Naive thymus-derived CD4-positive, alpha-beta T cell (primary cell): ENCODE measurements at regions of chr10 and their contacts with region 1.

Region 1: DNA sequence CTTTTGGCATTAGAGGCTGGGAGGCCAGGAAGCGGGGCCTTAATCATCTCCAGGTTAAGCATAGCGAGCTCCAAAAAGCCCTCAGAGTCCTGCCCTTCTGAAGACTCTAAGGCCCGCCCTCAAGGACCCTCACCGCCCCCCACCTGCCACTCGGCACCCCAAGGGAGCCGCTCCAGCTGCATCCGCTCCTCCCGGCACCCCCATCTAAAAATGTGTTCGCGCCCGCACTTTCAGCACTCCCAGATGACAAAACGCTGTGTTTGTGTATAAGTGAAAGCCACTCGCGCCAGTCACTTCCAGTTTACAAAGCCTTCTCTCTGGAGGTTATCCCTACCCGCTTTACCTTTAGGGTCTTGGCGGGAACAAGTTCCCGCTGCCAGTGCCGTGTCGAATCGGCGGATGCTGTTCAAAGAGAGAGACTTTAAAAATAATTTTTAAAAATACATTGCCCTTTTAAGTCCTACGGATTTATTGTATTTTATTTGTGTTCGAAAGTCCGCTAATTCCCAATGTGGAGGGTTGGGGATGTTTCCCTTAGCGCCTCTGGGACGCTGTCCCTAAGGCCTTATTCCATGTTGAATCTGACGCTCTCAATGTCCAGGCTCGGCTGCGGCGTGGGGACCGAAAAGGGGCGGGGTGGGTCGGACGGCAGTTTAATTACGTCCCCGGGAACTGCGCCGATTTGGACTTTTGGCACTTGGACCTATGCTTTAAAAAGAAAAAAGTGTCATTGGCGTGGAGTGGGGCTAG is at the starts of genes DCLRE1A and NHLRC2:
- DNase-seq: peak; percentile 26 to 55 (median 50)
- ATAC-seq: peak; percentile 73
- H3K4me3 ChIP-seq: peak within 1 kb of the TSS; percentile 90
- H3K4me3 Mint-ChIP-seq: peak within 1 kb of the TSS; percentile 90 to 100 (median 97)
- H3K27ac ChIP-seq: peak within 1 kb of the TSS; percentile 79
- H3K27ac Mint-ChIP-seq: peak within 1 kb of the TSS; percentile 89 to 100 (median 97)
- H3K4me1 ChIP-seq: peaks cover 3 to 42% of the 10 kb centered on the region in 2 donors
- H3K4me1 Mint-ChIP-seq: peaks cover 24 to 60% (median 52%) of the 10 kb centered on the region in 7 donors
- H3K27me3 ChIP-seq: no peaks in the 10 kb centered on the region
- H3K27me3 Mint-ChIP-seq: no peaks in the 10 kb centered on the region
- total RNA-seq, gene DCLRE1A: 1.5 to 12.9 (median 4.3) TPM
- total RNA-seq, gene NHLRC2: 10.3 to 25.9 (median 20.5) TPM

Region 2: GRCh38 chr10:112375721-112376395 is 1478.3 kb before region 1 on chr10:
- CTCF ChIA-PET with region 1: no interaction called
- POLR2A ChIA-PET with region 1: no interaction called
- intact Hi-C with region 1: loop called in 1 of 2 experiments (anchors 5 kb)
- DNase-seq: peak; percentile 33 to 70 (median 59)
- ATAC-seq: peak; percentile 87
- H3K4me3 ChIP-seq: peak overlapping the region; percentile 89
- H3K4me3 Mint-ChIP-seq: peak overlapping the region; percentile 95 to 100 (median 100)
- H3K27ac ChIP-seq: peak overlapping the region; percentile 95
- H3K27ac Mint-ChIP-seq: peak overlapping the region; percentile 97 to 100 (median 99)
- H3K4me1 ChIP-seq: peaks cover 11 to 21% of the 10 kb centered on the region in 2 donors
- H3K4me1 Mint-ChIP-seq: peaks cover 36 to 72% (median 61%) of the 10 kb centered on the region in 7 donors
- H3K27me3 ChIP-seq: no peaks in the 10 kb centered on the region
- H3K27me3 Mint-ChIP-seq: no peaks in the 10 kb centered on the region

Region 3: DNA sequence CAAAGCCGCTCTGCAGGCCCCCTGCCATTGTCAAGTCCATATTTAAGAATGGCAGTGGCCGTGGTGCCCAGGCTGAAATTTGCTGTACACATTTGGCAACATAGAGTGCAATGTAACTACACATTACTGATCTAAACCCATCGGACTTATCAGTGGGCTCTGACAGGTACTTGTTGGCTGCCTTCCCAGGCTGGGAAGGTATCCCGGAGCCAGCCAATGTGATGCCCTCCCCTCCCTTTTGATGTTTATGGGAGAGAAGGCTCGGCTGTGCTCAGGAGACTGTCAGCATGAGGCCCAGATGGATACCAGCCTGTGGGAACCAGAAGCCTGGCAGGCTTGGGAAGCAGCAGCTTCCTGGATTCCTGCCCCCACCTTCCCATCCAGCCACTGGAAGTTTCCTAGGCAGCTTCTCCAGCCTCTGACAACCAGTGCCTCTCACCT is 1050.2 kb before region 1 on chr10:
- CTCF ChIA-PET with region 1: no interaction called
- POLR2A ChIA-PET with region 1: no interaction called
- intact Hi-C with region 1: no loop called
- DNase-seq: no peak
- ATAC-seq: no peak
- H3K4me3 ChIP-seq: no peak overlapping the region
- H3K4me3 Mint-ChIP-seq: no peak overlapping the region
- H3K27ac ChIP-seq: no peak overlapping the region
- H3K27ac Mint-ChIP-seq: no peak overlapping the region
- H3K4me1 ChIP-seq: no peaks in the 10 kb centered on the region
- H3K4me1 Mint-ChIP-seq: peaks cover 0 to 5% (median 0%) of the 10 kb centered on the region in 7 donors
- H3K27me3 ChIP-seq: no peaks in the 10 kb centered on the region
- H3K27me3 Mint-ChIP-seq: no peaks in the 10 kb centered on the region

Region 4: GRCh38 chr10:113415246-113415645 is 438.9 kb before region 1 on chr10:
- CTCF ChIA-PET with region 1: no interaction called
- POLR2A ChIA-PET with region 1: no interaction called
- intact Hi-C with region 1: no loop called
- DNase-seq: no peak
- ATAC-seq: no peak
- H3K4me3 ChIP-seq: no peak overlapping the region
- H3K4me3 Mint-ChIP-seq: no peak overlapping the region
- H3K27ac ChIP-seq: no peak overlapping the region
- H3K27ac Mint-ChIP-seq: no peak overlapping the region
- H3K4me1 ChIP-seq: no peaks in the 10 kb centered on the region
- H3K4me1 Mint-ChIP-seq: no peaks in the 10 kb centered on the region
- H3K27me3 ChIP-seq: peaks cover 0 to 3% of the 10 kb centered on the region in 2 donors
- H3K27me3 Mint-ChIP-seq: peaks cover 2 to 36% (median 32%) of the 10 kb centered on the region in 5 donors

Region 5: GRCh38 chr10:113631684-113632367 is 222.4 kb before region 1 on chr10:
- CTCF ChIA-PET with region 1: no interaction called
- POLR2A ChIA-PET with region 1: no interaction called
- intact Hi-C with region 1: no loop called
- DNase-seq: no peak
- ATAC-seq: no peak
- H3K4me3 ChIP-seq: no peak overlapping the region
- H3K4me3 Mint-ChIP-seq: no peak overlapping the region
- H3K27ac ChIP-seq: no peak overlapping the region
- H3K27ac Mint-ChIP-seq: no peak overlapping the region
- H3K4me1 ChIP-seq: no peaks in the 10 kb centered on the region
- H3K4me1 Mint-ChIP-seq: peaks cover 0 to 5% (median 0%) of the 10 kb centered on the region in 7 donors
- H3K27me3 ChIP-seq: no peaks in the 10 kb centered on the region
- H3K27me3 Mint-ChIP-seq: peaks cover 7 to 35% (median 20%) of the 10 kb centered on the region in 5 donors

Region 6: DNA sequence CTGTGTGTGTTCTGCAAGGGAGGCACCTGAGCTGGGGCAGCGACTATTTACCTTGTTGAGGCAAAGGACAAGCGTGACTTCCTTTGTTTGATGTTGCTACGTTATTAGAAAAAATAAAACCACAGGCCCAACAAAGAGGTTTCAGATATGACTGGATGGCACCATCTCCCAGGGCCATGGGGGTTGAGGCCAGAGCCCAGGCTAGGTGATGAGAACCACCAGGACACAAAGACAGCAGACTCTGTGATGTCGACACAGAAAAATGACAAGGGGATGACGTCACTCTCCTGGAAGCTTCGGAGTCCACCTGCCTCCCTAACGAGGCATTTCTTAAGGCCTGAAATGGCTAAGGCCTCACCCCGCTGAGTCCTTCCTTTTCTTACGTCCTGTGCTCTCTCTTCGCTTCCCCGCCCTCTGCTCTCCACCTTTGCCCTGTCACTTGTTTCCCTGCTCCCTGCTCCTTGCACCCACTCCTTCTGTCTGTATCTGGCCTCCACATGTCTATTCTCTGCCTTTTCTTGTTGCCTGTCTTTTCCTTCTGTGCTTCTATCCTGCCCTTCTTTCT is 106.5 kb after region 1 on chr10:
- CTCF ChIA-PET with region 1: no interaction called
- POLR2A ChIA-PET with region 1: no interaction called
- intact Hi-C with region 1: loop called (anchors 1 kb)
- DNase-seq: peak in 5 of 9 donors; percentile 4 to 34 (median 21)
- ATAC-seq: no peak
- H3K4me3 ChIP-seq: peak overlapping the region; percentile 27
- H3K4me3 Mint-ChIP-seq: peak overlapping the region; percentile 31 to 79 (median 67)
- H3K27ac ChIP-seq: no peak overlapping the region
- H3K27ac Mint-ChIP-seq: peak overlapping the region in 8 of 9 donors; percentile 30 to 92 (median 82)
- H3K4me1 ChIP-seq: peaks cover 37 to 47% of the 10 kb centered on the region in 2 donors
- H3K4me1 Mint-ChIP-seq: peaks cover 26 to 64% (median 49%) of the 10 kb centered on the region in 7 donors
- H3K27me3 ChIP-seq: no peaks in the 10 kb centered on the region
- H3K27me3 Mint-ChIP-seq: peaks cover 0 to 27% (median 6%) of the 10 kb centered on the region in 5 donors

Region 7: GRCh38 chr10:114083040-114083439 is 228.9 kb after region 1 on chr10:
- CTCF ChIA-PET with region 1: no interaction called
- POLR2A ChIA-PET with region 1: no interaction called
- intact Hi-C with region 1: loop called in 1 of 2 experiments (anchors 5 kb)
- DNase-seq: peak in 2 of 9 donors; percentile 24 to 38
- ATAC-seq: peak; percentile 18
- H3K4me3 ChIP-seq: no peak overlapping the region
- H3K4me3 Mint-ChIP-seq: no peak overlapping the region
- H3K27ac ChIP-seq: no peak overlapping the region
- H3K27ac Mint-ChIP-seq: peak overlapping the region in 1 of 9 donors; percentile 48
- H3K4me1 ChIP-seq: no peaks in the 10 kb centered on the region
- H3K4me1 Mint-ChIP-seq: no peaks in the 10 kb centered on the region
- H3K27me3 ChIP-seq: no peaks in the 10 kb centered on the region
- H3K27me3 Mint-ChIP-seq: peaks cover 0 to 31% (median 4%) of the 10 kb centered on the region in 5 donors

Region 8: DNA sequence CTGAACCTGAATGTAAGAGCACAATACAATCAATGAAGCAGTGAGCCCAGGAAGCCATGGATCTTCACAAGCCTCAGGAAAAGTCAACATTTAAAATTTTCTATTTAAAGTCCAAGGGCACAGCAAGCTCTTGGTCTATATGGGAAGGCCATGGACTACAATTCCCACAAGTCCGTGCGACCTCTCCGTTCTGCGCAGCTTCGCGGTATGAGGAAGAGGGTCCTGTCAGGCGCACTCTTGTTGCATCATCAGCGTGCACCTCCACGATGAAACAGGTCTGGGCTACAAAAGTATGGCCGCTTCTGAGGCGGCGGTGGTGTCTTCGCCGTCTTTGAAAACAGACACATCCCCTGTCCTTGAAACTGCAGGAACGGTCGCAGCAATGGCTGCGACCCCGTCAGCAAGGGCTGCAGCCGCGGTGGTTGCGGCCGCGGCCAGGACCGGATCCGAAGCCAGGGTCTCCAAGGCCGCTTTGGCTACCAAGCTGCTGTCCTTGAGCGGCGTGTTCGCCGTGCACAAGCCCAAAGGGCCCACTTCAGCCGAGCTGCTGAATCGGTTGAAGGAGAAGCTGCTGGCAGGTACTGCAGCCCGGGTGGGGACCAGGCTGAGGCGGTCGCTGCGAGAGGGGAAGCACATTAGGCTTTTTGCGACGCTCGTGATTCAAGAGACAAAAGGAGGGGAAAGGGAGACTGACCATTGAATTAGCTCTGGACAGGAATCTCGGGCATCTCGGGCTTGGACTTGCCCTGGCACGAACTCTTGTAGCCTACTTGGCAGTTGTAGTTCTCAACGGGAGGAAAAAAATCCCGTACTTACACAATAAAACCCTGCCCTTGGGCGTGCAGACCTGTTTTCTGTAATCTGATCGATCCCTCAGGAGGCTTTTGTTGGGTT is 1084.0 kb after region 1 on chr10 and contains the start of gene TRUB1:
- CTCF ChIA-PET with region 1: no interaction called
- POLR2A ChIA-PET with region 1: no interaction called
- intact Hi-C with region 1: loop called (anchors 1 to 10 kb)
- DNase-seq: peak; percentile 59 to 91 (median 87)
- ATAC-seq: peak; percentile 100
- H3K4me3 ChIP-seq: peak within 1 kb of the TSS; percentile 87
- H3K4me3 Mint-ChIP-seq: peak within 1 kb of the TSS; percentile 94 to 99 (median 96)
- H3K27ac ChIP-seq: peak within 1 kb of the TSS; percentile 79
- H3K27ac Mint-ChIP-seq: peak within 1 kb of the TSS; percentile 95 to 98 (median 96)
- H3K4me1 ChIP-seq: peaks cover 12 to 23% of the 10 kb centered on the region in 2 donors
- H3K4me1 Mint-ChIP-seq: peaks cover 20 to 43% (median 31%) of the 10 kb centered on the region in 7 donors
- H3K27me3 ChIP-seq: no peaks in the 10 kb centered on the region
- H3K27me3 Mint-ChIP-seq: no peaks in the 10 kb centered on the region
- total RNA-seq, gene TRUB1: 6.8 to 14.6 (median 12.9) TPM